Activated naive CD4-positive, alpha-beta T cell treated with anti-CD3 and anti-CD28 coated beads for 36 hours (primary cell): ENCODE measurements at regions of chr1 and their contacts with region 1.

Region 1: GRCh38 chr1:109112652-109113285 is 1.1 kb upstream of the ELAPOR1 start:
- DNase-seq: peak; percentile 93
- H3K4me3 Mint-ChIP-seq: peak overlapping the region; percentile 80
- H3K27ac Mint-ChIP-seq: no peak overlapping the region
- H3K4me1 Mint-ChIP-seq: peaks cover 40% of the 10 kb centered on the region
- H3K27me3 Mint-ChIP-seq: peaks cover 4% of the 10 kb centered on the region

Region 2: GRCh38 chr1:108661030-108661620 is 451.6 kb before region 1 on chr1 and contains the start of gene HENMT1:
- CTCF ChIA-PET with region 1: no interaction called
- intact Hi-C with region 1: no loop called
- DNase-seq: peak; percentile 78
- H3K4me3 Mint-ChIP-seq: peak within 1 kb of the TSS; percentile 84
- H3K27ac Mint-ChIP-seq: peak within 1 kb of the TSS; percentile 94
- H3K4me1 Mint-ChIP-seq: peaks cover 25% of the 10 kb centered on the region
- H3K27me3 Mint-ChIP-seq: no peaks in the 10 kb centered on the region
- total RNA-seq, gene HENMT1: 18.7 to 19.3 TPM

Region 3: GRCh38 chr1:108746372-108747205 is 366.2 kb before region 1 on chr1 and contains the start of gene STXBP3:
- CTCF ChIA-PET with region 1: no interaction called
- intact Hi-C with region 1: loop called (anchors 1 kb)
- DNase-seq: peak; percentile 100
- H3K4me3 Mint-ChIP-seq: peak within 1 kb of the TSS; percentile 94
- H3K27ac Mint-ChIP-seq: peak within 1 kb of the TSS; percentile 92
- H3K4me1 Mint-ChIP-seq: peaks cover 28% of the 10 kb centered on the region
- H3K27me3 Mint-ChIP-seq: no peaks in the 10 kb centered on the region
- total RNA-seq, gene STXBP3: 29.1 to 30.3 TPM

Region 4: GRCh38 chr1:108877348-108878159 is 235.2 kb before region 1 on chr1:
- CTCF ChIA-PET with region 1: no interaction called
- intact Hi-C with region 1: loop called (anchors 1 kb)
- DNase-seq: no peak
- H3K4me3 Mint-ChIP-seq: peak overlapping the region; percentile 89
- H3K27ac Mint-ChIP-seq: no peak overlapping the region
- H3K4me1 Mint-ChIP-seq: peaks cover 4% of the 10 kb centered on the region
- H3K27me3 Mint-ChIP-seq: peaks cover 25% of the 10 kb centered on the region

Region 5: GRCh38 chr1:109041621-109042468 is 70.9 kb before region 1 on chr1 and contains the start of gene WDR47:
- CTCF ChIA-PET with region 1: interaction called, 6 read pairs
- intact Hi-C with region 1: loop called (anchors 1 kb)
- DNase-seq: peak; percentile 97
- H3K4me3 Mint-ChIP-seq: peak within 1 kb of the TSS; percentile 73
- H3K27ac Mint-ChIP-seq: peak within 1 kb of the TSS; percentile 6
- H3K4me1 Mint-ChIP-seq: peaks cover 12% of the 10 kb centered on the region
- H3K27me3 Mint-ChIP-seq: no peaks in the 10 kb centered on the region
- total RNA-seq, gene WDR47: 8.2 to 8.4 TPM

Region 6: DNA sequence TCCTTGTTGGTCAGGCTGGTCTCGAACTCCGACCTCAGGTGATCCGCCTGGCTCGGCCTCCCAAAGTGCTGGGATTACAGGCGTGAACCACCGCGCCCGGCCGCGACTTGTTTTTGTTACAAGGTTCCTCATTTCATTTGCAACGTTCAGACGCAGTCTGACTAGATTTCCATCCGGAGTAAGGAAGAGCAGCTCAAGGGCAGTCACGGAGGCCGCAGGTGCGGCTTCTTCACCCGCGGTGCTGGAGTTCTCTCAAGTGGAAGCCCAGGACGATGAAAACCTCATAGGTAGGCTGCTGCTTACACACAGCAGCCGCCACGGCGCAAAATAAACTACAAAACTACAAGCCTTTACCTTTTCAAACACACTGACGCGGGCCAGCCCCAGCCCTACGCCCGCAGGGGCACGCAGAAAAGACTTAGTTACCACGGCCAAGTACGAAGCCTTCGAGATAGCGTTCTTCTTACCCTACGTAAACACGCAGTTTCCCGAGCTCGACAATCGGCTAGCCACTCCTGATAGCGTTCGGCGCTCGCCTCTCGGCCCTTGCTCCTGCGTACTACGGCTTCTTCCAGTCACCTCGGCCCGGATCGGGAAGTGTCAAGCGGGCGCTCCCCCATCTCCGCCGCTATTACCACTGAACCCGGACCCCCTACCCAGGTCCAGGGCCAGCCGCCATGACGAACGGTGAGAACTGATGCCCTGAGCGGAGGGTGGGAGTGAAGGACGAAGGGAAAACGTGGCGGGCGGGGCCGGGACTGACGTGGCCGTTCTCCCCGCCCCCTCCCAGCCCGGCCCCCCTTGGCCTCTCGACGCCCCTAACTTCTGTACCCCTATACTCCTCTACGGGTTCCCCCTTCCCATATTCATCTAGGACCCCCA is 22.3 kb before region 1 on chr1 and contains the start of gene TMEM167B:
- CTCF ChIA-PET with region 1: interaction called, 13 read pairs
- intact Hi-C with region 1: loop called (anchors 1 kb)
- DNase-seq: peak; percentile 95
- H3K4me3 Mint-ChIP-seq: peak within 1 kb of the TSS; percentile 82
- H3K27ac Mint-ChIP-seq: peak within 1 kb of the TSS; percentile 87
- H3K4me1 Mint-ChIP-seq: peaks cover 29% of the 10 kb centered on the region
- H3K27me3 Mint-ChIP-seq: no peaks in the 10 kb centered on the region
- total RNA-seq, gene TMEM167B: 35.0 to 37.6 TPM

Region 7: GRCh38 chr1:109161858-109162606 is 49.3 kb after region 1 on chr1:
- CTCF ChIA-PET with region 1: no interaction called
- intact Hi-C with region 1: loop called (anchors 1 kb)
- DNase-seq: peak; percentile 42
- H3K4me3 Mint-ChIP-seq: no peak overlapping the region
- H3K27ac Mint-ChIP-seq: no peak overlapping the region
- H3K4me1 Mint-ChIP-seq: peaks cover 17% of the 10 kb centered on the region
- H3K27me3 Mint-ChIP-seq: no peaks in the 10 kb centered on the region

Region 8: GRCh38 chr1:109483672-109484518 is 371.1 kb after region 1 on chr1 and contains the start of gene ATXN7L2:
- CTCF ChIA-PET with region 1: no interaction called
- intact Hi-C with region 1: loop called (anchors 5 kb)
- DNase-seq: peak; percentile 93
- H3K4me3 Mint-ChIP-seq: peak within 1 kb of the TSS; percentile 95
- H3K27ac Mint-ChIP-seq: peak within 1 kb of the TSS; percentile 85
- H3K4me1 Mint-ChIP-seq: peaks cover 24% of the 10 kb centered on the region
- H3K27me3 Mint-ChIP-seq: no peaks in the 10 kb centered on the region
- total RNA-seq, gene ATXN7L2: 15.2 to 16.4 TPM